ENCODE measurements at regions of chr5 and their contacts with region 1.

Region 1: GRCh38 chr5:178626484-178627258 is at the start of gene CLK4:
- DNase-seq: peak; percentile 84 to 97
- H3K4me3 ChIP-seq: peak within 1 kb of the TSS; percentile 81 to 98 (median 93)
- H3K27ac ChIP-seq: peak within 1 kb of the TSS; percentile 90
- H3K4me1 ChIP-seq: peaks cover 0 to 8% (median 4%) of the 10 kb centered on the region in 4 experiments; a peak in 3 of 7 replicates
- H3K27me3 ChIP-seq: no peaks in the 10 kb centered on the region; a peak in 1 of 7 replicates
- CTCF ChIP-seq: no peak
- EP300 ChIP-seq: no peak
- POLR2A ChIP-seq: peak; percentile 78 to 85
- RAD21 ChIP-seq: peak in 1 of 2 experiments; percentile 17; a peak in 1 of 4 replicates
- total RNA-seq, gene CLK4: 11.0 and 12.6 TPM in 2 replicates

Region 2: DNA sequence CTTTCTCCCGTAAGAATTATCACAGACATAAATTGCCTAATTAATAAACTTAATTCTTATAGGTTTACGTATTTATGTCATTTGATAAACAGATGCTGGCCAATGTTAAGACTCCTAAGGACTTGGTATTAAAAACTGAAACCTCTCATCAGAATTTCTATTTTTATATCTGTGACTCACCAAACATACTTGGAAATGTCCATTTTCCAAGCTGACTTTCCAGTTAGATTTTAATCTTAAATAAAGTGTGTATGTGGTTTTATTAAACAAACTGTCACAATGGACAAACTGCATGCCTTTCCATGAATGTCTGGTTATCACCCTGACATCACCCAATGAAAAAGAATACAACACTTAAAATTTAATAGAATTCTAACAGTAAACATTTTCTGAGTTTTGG is 23.9 kb before region 1 on chr5:
- CTCF ChIA-PET with region 1: interaction called, 3 read pairs
- POLR2A ChIA-PET with region 1: interaction called, 11 read pairs
- DNase-seq: no peak
- H3K4me3 ChIP-seq: no peak overlapping the region
- H3K27ac ChIP-seq: no peak overlapping the region
- H3K4me1 ChIP-seq: no peaks in the 10 kb centered on the region
- H3K27me3 ChIP-seq: no peaks in the 10 kb centered on the region
- CTCF ChIP-seq: no peak
- EP300 ChIP-seq: no peak
- POLR2A ChIP-seq: no peak
- RAD21 ChIP-seq: no peak

Region 3: GRCh38 chr5:178612299-178612698 is 14.4 kb before region 1 on chr5:
- CTCF ChIA-PET with region 1: interaction called, 5 read pairs
- POLR2A ChIA-PET with region 1: interaction called, 18 read pairs
- DNase-seq: no peak
- H3K4me3 ChIP-seq: no peak overlapping the region
- H3K27ac ChIP-seq: no peak overlapping the region
- H3K4me1 ChIP-seq: no peaks in the 10 kb centered on the region
- H3K27me3 ChIP-seq: no peaks in the 10 kb centered on the region
- CTCF ChIP-seq: no peak
- EP300 ChIP-seq: no peak
- POLR2A ChIP-seq: no peak
- RAD21 ChIP-seq: no peak

Measured in H1 (cell line).